Activated CD4-positive, alpha-beta T cell treated with anti-CD3 and anti-CD28 coated beads, Interleukin-2, amount 10 ng/mL, durations not matched to agents 24 days and 14 days (primary cell): ENCODE measurements at regions of chr3 and their contacts with region 1.

Region 1: GRCh38 chr3:187139126-187139894 is at the start of gene RPL39L:
- DNase-seq: peak; percentile 98
- H3K4me3 Mint-ChIP-seq: peak within 1 kb of the TSS; percentile 93
- H3K27ac Mint-ChIP-seq: peak within 1 kb of the TSS; percentile 98
- H3K4me1 Mint-ChIP-seq: peaks cover 27% of the 10 kb centered on the region
- H3K27me3 Mint-ChIP-seq: no peaks in the 10 kb centered on the region
- total RNA-seq, gene RPL39L: 10.4 and 11.7 TPM in 2 replicates

Region 2: DNA sequence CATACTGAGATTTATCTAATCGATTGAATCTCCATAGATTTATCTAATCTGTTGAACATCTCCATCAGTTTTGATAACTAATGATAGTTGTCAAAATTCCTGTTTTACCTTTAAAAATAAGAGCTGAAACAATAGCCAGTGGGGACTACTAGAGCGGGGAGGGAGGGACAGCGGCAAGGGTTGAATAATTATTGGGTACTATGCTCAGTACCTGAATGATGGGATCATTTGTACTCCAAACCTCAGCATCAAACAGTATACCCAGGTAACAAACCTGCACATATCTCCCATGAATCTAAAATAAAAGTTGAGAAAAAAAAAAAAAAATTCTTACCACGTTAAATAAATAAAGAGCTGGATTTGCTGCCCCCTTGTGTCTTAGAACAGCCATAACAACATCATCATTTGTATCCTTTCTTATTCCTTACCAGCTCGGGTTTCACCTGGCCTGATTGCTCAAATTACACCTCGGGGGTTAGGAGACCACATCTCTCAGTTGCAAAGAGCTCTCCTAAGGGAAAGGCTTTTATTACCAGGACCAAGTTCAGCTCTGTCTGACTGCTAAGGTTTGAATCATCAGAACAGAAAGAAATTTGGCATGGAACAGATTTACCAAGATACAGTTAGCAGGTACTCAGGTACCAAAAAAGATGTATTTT is 25.7 kb after region 1 on chr3:
- intact Hi-C with region 1: loop called (anchors 1 kb)
- DNase-seq: peak; percentile 82
- H3K4me3 Mint-ChIP-seq: no peak overlapping the region
- H3K27ac Mint-ChIP-seq: no peak overlapping the region
- H3K4me1 Mint-ChIP-seq: peaks cover 4% of the 10 kb centered on the region
- H3K27me3 Mint-ChIP-seq: peaks cover 44% of the 10 kb centered on the region

Region 3: GRCh38 chr3:187745201-187746058 is 606.1 kb after region 1 on chr3 and contains the start of gene BCL6:
- intact Hi-C with region 1: no loop called
- DNase-seq: peak; percentile 97
- H3K4me3 Mint-ChIP-seq: peak within 1 kb of the TSS; percentile 98
- H3K27ac Mint-ChIP-seq: peak within 1 kb of the TSS; percentile 99
- H3K4me1 Mint-ChIP-seq: peaks cover 61% of the 10 kb centered on the region
- H3K27me3 Mint-ChIP-seq: no peaks in the 10 kb centered on the region
- total RNA-seq, gene BCL6: 41.7 and 51.7 TPM in 2 replicates